ENCODE measurements at regions of chr17 and their contacts with region 1.

Region 1: GRCh38 chr17:64920026-64920418 is 744 bp upstream of the LRRC37A3 start:
- DNase-seq: peak in 1 of 5 donors; percentile 45
- H3K4me3 ChIP-seq: peak overlapping the region; percentile 47 to 61
- H3K4me3 Mint-ChIP-seq: peak overlapping the region; percentile 86 to 97 (median 88)
- H3K27ac ChIP-seq: peak overlapping the region; percentile 71
- H3K27ac Mint-ChIP-seq: peak overlapping the region; percentile 91 to 97 (median 95)
- H3K4me1 ChIP-seq: peaks cover 6% of the 10 kb centered on the region
- H3K4me1 Mint-ChIP-seq: peaks cover 2 to 18% (median 11%) of the 10 kb centered on the region in 4 donors
- H3K27me3 ChIP-seq: no peaks in the 10 kb centered on the region
- H3K27me3 Mint-ChIP-seq: no peaks in the 10 kb centered on the region

Region 2: GRCh38 chr17:64732336-64733009 is 187.5 kb before region 1 on chr17:
- CTCF ChIA-PET with region 1: no interaction called
- POLR2A ChIA-PET with region 1: no interaction called
- intact Hi-C with region 1: no loop called
- DNase-seq: no peak
- H3K4me3 ChIP-seq: no peak overlapping the region
- H3K4me3 Mint-ChIP-seq: no peak overlapping the region
- H3K27ac ChIP-seq: no peak overlapping the region
- H3K27ac Mint-ChIP-seq: no peak overlapping the region
- H3K4me1 ChIP-seq: no peaks in the 10 kb centered on the region
- H3K4me1 Mint-ChIP-seq: peaks cover 5 to 6% (median 6%) of the 10 kb centered on the region in 4 donors
- H3K27me3 ChIP-seq: no peaks in the 10 kb centered on the region
- H3K27me3 Mint-ChIP-seq: no peaks in the 10 kb centered on the region

Region 3: GRCh38 chr17:64968652-64969501 is 48.9 kb after region 1 on chr17:
- CTCF ChIA-PET with region 1: no interaction called
- POLR2A ChIA-PET with region 1: interaction called, 13 read pairs
- intact Hi-C with region 1: loop called (anchors 5 kb)
- DNase-seq: peak; percentile 45 to 71 (median 47)
- H3K4me3 ChIP-seq: no peak overlapping the region
- H3K4me3 Mint-ChIP-seq: peak overlapping the region; percentile 69 to 92 (median 80)
- H3K27ac ChIP-seq: peak overlapping the region; percentile 62
- H3K27ac Mint-ChIP-seq: peak overlapping the region; percentile 92 to 99 (median 97)
- H3K4me1 ChIP-seq: peaks cover 77% of the 10 kb centered on the region
- H3K4me1 Mint-ChIP-seq: peaks cover 35 to 79% (median 59%) of the 10 kb centered on the region in 4 donors
- H3K27me3 ChIP-seq: no peaks in the 10 kb centered on the region
- H3K27me3 Mint-ChIP-seq: no peaks in the 10 kb centered on the region